WTC11 (cell line): ENCODE measurements at regions of chr17 and their contacts with region 1.

Region 1: DNA sequence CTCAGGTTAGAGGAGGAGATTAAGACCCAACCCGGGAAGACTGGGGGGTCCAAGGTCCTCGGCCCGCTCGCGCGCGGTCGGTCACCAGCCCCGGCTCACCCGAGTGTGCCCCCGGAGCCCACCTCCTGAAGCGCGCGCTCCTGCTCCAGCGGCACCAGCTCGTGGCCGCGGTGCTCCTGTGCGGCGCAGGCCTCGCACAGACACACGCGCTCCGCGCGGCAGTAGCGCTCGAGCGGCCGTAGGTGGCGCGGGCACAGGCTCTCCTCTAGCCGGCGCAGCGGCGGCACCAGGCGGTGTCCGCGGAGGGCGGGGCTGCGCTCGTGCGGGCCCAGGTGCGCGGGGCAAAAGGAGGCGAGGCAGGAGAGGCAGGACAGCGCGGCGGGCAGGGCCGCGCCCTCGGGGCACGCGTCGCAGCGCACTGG is 618 bp downstream of the TRIM47 start:
- DNase-seq: peak; percentile 81
- ATAC-seq: peak; percentile 81
- H3K4me3 Mint-ChIP-seq: peak overlapping the region; percentile 77
- H3K27ac Mint-ChIP-seq: no peak overlapping the region
- H3K4me1 Mint-ChIP-seq: peaks cover 17% of the 10 kb centered on the region
- H3K27me3 Mint-ChIP-seq: peaks cover 39% of the 10 kb centered on the region
- CTCF ChIP-seq: no peak

Region 2: DNA sequence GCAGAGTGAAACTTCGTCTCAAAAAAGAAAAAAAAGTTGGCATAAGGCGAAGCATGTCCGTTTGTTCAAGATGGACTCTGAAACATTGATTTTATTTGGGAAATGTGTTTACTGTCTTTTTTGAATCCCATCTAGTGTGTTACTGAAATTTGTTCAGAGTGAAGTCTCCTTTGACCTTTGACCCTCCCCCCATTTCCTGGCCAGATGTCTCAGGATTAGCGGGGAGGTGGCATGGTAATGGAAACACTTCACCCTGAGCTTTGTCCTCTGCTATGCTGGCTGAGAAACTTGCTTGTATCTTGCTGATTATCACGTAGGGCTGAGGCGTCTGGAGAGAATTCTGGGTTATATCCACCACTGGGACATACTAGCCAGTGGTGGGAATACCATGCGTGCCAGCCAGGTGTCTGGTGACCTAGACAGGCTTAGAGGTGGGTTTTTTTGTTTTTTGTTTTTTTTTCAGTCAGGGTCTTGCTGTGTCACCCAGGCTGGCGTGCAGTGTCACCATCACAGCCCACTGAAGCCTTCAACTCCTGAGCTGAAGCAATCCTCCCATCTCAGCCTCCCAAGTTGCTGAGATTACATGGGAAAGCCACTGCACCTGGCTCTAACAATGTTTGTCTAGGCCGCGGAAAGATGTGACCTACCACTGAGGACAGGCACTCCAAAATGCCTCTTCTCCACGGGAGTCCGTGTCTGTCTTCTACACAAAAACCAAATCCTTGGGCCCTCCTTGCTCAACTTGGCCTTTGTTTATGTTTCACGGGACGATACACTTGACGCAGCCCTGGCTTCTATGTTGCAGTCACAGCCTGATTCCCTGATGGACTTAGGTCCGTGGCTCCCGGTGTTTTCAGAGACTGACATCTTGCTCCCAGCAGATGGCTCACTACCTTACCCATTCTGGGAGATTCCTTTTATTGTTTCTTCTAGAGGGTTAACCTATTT is 106.2 kb before region 1 on chr17:
- CTCF ChIA-PET with region 1: no interaction called
- POLR2A ChIA-PET with region 1: no interaction called
- DNase-seq: no peak
- ATAC-seq: no peak
- H3K4me3 Mint-ChIP-seq: no peak overlapping the region
- H3K27ac Mint-ChIP-seq: peak overlapping the region; percentile 54
- H3K4me1 Mint-ChIP-seq: peaks cover 20% of the 10 kb centered on the region
- H3K27me3 Mint-ChIP-seq: no peaks in the 10 kb centered on the region
- CTCF ChIP-seq: no peak

Region 3: DNA sequence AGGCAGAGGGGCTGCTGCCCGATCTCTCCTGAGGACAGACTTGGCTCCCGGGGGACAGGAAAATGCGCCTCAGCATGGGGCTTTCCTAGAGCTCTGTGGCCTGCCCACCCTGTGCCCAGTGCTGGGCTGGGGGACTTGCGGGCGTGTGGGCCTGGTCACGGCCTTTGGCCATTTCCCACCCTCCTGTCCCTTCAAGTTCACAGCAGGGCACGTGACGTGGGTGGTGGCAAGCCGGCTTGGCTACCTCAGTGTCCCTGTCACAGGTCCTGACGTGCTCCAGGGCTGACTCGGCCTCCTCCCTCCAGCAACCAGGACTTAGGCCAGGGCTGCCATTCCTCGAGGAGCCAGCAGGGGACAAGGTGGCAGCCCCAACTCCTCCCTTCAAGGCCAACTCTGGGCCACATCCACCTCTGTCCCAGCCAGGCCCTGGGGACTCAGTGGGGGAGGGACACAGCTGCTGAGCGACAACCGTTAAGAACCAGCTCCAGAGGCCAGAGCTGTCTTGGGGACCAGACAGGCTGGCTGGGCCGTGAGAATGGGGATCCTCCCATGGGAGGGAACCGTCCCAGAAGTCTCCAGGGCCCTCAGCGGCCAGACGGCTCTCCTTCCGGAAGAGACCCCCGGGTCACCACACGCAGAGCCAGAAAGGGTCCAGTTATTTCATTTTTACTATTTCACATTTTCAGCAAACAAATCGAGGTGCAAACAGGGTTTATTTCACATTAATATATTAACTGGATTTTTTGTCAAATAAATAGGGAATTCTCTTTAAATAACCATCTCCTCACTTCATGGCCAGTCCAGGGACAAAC is 32.5 kb before region 1 on chr17:
- CTCF ChIA-PET with region 1: interaction called, 10 read pairs
- POLR2A ChIA-PET with region 1: no interaction called
- DNase-seq: peak; percentile 88
- ATAC-seq: peak; percentile 90
- H3K4me3 Mint-ChIP-seq: no peak overlapping the region
- H3K27ac Mint-ChIP-seq: peak overlapping the region; percentile 90
- H3K4me1 Mint-ChIP-seq: peaks cover 21% of the 10 kb centered on the region
- H3K27me3 Mint-ChIP-seq: no peaks in the 10 kb centered on the region
- CTCF ChIP-seq: peak; percentile 82

Region 4: DNA sequence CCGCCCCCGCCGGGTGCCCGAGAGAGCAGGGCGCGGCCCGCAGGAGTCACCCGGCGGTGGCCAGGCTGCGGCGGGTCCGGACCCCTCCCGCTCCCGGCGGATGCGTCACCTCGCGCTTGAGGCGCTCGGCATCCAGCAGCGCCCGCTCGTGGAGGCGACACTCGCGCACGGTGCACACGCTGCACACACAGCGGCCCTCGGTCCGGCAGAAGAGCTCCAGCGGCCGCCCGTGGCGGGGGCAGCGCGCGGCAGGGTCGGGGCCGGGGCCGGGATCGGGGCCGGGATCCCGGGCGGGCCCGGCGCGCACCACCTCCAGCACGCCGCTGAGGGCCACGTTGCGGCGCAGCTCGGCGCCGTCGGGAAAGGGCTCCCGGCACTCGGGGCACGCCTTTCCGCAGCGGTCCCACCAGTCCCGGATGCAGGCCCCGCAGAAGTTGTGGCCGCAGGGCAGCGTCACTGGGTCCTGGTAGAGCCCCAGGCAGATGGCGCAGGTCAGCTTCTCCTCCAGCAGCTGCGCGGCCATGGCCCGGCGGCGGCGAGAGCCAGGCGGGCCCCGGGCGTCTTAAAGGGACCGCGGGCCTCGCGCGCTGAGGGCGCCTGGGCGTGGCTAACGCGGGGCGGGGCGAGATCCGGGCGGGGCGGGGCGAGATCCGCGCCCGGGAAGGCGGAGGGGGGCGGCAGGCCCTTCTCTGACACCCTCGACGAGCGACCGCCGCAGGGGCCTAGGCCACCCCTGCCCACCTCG is 18.8 kb after region 1 on chr17 and contains the start of gene TRIM65:
- CTCF ChIA-PET with region 1: interaction called, 71 read pairs
- POLR2A ChIA-PET with region 1: interaction called, 3 read pairs
- DNase-seq: peak; percentile 73
- ATAC-seq: peak; percentile 60
- H3K4me3 Mint-ChIP-seq: peak within 1 kb of the TSS; percentile 82
- H3K27ac Mint-ChIP-seq: peak within 1 kb of the TSS; percentile 88
- H3K4me1 Mint-ChIP-seq: peaks cover 26% of the 10 kb centered on the region
- H3K27me3 Mint-ChIP-seq: no peaks in the 10 kb centered on the region
- CTCF ChIP-seq: no peak
- total RNA-seq, gene TRIM65: 51.3 to 56.4 TPM (median 51.4 TPM) in 3 replicates

Region 5: DNA sequence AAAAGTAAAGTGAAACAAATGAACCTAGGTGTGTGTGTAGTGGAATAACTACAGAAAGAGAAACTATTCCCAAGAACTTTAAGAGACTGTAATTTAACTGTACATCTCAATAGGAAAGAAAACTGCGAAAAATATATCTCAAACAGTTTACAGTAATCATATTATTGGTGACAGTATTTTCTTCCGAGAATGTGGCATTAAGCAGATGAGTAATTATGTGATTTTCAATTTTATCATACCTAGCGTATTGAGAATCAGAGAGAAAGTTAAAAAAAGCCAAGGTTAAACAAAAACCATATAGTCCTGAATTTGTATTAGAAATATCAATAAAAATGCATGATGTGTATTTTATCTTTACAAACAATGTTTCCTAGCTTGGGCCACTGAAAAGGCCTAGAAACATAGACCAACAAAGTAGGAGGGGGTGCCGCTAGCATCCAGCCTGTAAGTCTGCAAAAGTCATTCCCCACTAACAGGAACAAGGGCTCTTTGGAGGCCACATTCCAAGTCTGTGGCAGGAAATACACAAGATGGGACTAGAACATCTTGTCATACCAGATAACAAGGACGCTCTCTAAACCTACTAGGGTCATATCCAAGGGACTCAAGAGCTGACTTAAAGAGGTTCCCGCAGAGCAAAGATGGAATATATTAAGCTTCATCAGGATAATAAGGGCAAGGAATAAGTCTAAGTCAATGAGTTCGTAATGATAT is 342.1 kb after region 1 on chr17:
- CTCF ChIA-PET with region 1: no interaction called
- POLR2A ChIA-PET with region 1: no interaction called
- DNase-seq: no peak
- ATAC-seq: no peak
- H3K4me3 Mint-ChIP-seq: no peak overlapping the region
- H3K27ac Mint-ChIP-seq: no peak overlapping the region
- H3K4me1 Mint-ChIP-seq: no peaks in the 10 kb centered on the region
- H3K27me3 Mint-ChIP-seq: no peaks in the 10 kb centered on the region
- CTCF ChIP-seq: no peak